ENCODE measurements at regions of chr15 and their contacts with region 1.

Region 1: DNA sequence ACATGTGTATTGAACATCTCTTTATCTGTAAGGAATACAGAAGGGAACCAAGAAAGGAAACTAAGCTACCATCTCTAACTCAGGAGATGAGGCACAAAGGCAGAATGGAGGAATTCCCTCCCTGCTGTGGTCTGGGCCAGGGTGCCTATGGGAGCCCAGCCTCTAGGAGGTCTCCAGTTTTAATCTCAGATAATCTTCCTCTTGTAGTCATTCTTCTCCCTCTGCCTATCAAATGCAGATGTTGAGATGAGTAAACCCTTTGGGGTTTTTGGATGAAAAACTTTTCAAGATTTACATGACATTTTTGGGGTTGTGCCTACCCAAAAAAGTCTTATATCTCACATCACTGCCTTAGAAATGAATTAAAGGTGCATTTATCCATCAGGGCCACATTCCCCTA is 23.3 kb downstream of the SCG5 start:
- DNase-seq: no peak
- H3K4me3 ChIP-seq: no peak overlapping the region
- CTCF ChIP-seq: no peak

Region 2: DNA sequence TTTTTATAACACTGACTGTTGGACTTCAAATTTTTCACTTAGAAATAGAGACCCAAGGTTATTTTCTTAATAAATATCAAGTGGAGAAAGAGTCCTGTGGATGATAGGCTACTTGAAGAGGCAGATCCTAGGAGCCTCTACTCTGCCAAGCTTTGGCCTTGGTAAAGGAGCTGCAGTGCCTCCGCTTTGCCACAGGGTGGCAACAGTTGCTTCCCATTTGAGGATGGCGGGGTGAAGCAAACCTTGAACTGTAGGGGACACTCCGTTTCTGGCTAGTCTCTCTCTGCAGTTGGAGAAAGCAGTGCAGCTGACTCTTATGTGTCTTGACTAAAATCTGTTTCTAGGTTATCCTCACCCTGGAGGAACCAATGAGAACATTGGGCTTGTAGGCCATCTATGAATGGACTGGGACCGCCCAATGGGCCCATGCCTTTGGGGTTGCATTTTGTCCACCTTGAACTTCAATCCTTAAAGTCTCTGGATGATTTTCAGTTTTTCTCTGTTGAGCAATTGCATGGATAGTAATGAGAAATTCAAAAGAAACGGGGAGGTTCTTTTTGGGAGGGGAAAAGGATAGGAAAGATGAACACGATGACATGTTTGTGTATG is 13.5 kb before region 1 on chr15:
- CTCF ChIA-PET with region 1: interaction called, 68 read pairs
- POLR2A ChIA-PET with region 1: no interaction called
- DNase-seq: peak; percentile 33
- H3K4me3 ChIP-seq: no peak overlapping the region
- CTCF ChIP-seq: peak; percentile 90

Region 3: DNA sequence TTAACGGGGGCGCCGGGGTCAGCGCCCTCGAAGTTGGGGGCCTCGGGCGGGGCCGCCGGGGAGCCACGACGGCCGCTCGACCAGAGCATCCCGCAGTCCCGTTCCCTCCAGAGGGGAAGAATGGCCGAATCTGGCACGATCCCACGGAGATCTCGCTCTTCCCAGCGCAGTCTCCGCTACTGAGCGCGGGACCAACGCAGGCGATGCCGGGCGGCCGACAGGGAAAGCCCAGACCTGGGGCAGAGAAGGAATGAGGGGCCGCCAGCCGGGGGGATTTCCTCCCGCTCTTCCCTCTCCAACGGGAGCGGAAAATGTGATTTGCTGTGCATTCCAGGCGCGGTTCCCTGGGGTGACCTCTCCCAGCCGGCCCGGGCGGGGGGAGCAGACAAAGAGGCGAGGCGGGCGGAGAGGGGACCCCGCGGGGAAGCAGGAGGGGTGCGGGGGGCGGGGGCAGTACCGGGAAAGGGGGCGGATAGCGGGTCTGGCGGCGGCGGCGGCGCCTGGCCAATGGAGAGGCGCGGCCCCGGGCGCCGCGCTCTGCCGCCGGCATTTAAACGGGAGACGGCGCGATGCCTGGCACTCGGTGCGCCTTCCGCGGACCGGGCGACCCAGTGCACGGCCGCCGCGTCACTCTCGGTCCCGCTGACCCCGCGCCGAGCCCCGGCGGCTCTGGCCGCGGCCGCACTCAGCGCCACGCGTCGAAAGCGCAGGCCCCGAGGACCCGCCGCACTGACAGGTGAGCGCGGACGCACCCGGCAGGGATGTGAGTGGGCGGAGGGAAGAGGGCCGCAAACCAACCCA is 52.8 kb after region 1 on chr15 and contains the start of gene GREM1:
- CTCF ChIA-PET with region 1: interaction called, 41 read pairs
- POLR2A ChIA-PET with region 1: interaction called, 9 read pairs
- DNase-seq: no peak
- H3K4me3 ChIP-seq: peak within 1 kb of the TSS; percentile 93
- CTCF ChIP-seq: no peak

Region 4: GRCh38 chr15:32743411-32744140 is 78.8 kb after region 1 on chr15:
- CTCF ChIA-PET with region 1: interaction called, 16 read pairs
- POLR2A ChIA-PET with region 1: interaction called, 4 read pairs
- DNase-seq: no peak
- H3K4me3 ChIP-seq: no peak overlapping the region
- CTCF ChIP-seq: no peak

Region 5: DNA sequence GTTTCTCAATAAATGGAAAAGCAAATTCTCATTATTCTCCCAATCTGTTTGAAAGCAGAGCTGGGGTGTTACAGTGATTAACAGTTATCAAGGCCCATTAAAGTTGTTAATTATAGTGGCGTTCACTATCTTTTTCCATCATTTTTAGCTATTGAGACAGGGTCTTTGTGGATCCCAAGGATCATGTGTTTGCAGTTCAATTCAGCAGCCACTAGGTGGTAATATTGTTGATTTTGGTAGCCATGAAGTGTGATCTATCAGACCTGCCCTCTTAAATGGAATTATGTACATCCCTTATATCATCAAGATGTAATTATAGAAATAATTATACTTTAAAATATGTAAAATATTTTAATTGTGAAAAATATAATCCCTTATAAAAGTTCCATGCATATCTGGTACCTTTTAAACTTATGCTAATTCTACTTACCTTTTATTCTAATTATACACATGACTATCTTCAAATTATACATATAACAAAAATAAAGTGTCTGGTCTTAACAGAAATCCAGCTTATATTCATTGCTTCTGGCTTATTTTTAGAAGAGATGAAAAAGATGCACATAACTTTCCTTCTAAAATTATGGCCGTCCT is 179.4 kb after region 1 on chr15:
- CTCF ChIA-PET with region 1: interaction called, 33 read pairs
- POLR2A ChIA-PET with region 1: no interaction called
- DNase-seq: no peak
- H3K4me3 ChIP-seq: no peak overlapping the region
- CTCF ChIP-seq: peak; percentile 48

Region 6: DNA sequence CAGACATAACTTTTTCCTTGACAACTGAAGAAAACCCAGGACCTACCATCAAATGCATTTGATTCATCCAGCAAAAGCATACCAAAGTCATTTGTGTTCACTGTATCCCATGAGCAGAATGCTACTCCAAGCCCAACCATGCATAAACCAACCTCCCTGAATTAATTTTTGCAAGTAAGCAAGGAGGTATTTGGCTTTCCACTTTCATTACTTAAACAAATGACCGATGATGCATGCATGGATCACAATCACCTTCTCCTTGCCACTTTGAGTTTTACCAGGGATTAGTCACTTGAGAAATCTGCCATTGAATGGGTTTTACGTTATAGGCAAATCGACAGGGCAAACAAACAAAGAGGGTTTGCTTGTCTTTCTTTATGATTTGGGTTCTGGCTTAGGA is 314.9 kb after region 1 on chr15:
- CTCF ChIA-PET with region 1: interaction called, 14 read pairs
- POLR2A ChIA-PET with region 1: no interaction called
- DNase-seq: peak; percentile 95
- H3K4me3 ChIP-seq: peak overlapping the region; percentile 23
- CTCF ChIP-seq: no peak